ENCODE measurements at regions of chr11 and their contacts with region 1.

Region 1: DNA sequence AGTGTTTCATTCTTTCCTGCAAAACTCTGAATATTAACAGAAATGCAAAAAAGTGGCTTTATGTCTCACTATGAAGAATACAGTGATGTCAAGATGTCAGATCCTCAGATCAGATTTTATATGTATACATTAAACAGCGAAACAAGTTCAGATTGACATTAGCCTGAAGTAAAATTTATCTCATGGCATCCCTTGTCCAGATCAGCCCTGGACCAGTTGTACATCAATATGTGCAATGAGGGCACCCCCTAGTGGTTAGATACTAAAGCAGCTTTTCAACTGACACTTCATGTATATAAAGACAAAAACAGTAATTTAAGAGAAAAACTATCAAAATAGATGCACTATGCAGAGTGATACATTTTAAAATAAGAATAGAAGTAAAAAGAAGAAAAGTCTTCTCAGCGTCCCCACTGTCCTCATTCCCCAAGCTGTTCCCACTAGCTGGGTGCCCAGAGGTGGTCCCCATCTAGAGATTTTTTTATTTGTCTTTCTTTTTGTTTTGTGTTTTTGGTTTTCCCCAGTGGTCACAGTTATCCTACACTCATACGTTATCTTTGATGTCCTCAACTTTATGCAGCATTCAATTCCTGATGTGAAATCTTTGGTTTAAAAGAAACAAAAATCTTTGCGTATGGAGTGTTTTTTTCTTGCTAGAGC is 2193.4 kb upstream of the RAG2 start:
- DNase-seq: peak; percentile 51
- H3K4me3 ChIP-seq: no peak overlapping the region
- H3K27ac ChIP-seq: no peak overlapping the region
- H3K4me1 ChIP-seq: no peaks in the 10 kb centered on the region
- H3K27me3 ChIP-seq: no peaks in the 10 kb centered on the region
- CTCF ChIP-seq: peak; percentile 57
- POLR2A ChIP-seq: no peak

Region 2: DNA sequence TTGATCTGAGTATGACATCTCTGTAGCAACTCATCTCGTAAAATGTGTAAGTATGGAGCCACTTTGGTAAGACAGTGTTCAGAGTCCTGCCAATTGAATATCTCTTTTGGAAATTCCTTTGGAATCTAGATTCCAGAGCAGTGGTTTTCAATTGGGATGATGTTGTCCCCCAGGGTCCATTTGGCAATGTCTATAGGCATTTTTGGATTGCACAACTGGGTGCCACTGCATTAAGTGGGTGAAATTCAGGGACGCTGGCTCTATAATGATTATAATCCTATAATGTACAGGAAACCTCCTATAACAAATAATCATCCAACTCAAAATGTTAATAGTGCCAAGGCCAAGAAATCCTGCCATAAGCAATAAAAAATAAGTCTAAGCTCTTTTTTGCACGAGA is 1788.6 kb before region 1 on chr11:
- CTCF ChIA-PET with region 1: interaction called, 4 read pairs
- POLR2A ChIA-PET with region 1: no interaction called
- dilution Hi-C with region 1: no loop called
- intact Hi-C with region 1: loop called (anchors 5 kb)
- DNase-seq: no peak
- H3K4me3 ChIP-seq: no peak overlapping the region
- H3K27ac ChIP-seq: no peak overlapping the region
- H3K4me1 ChIP-seq: no peaks in the 10 kb centered on the region
- H3K27me3 ChIP-seq: no peaks in the 10 kb centered on the region
- CTCF ChIP-seq: no peak
- POLR2A ChIP-seq: no peak

Region 3: GRCh38 chr11:37657645-37658044 is 1133.8 kb before region 1 on chr11:
- CTCF ChIA-PET with region 1: interaction called, 10 read pairs
- POLR2A ChIA-PET with region 1: no interaction called
- dilution Hi-C with region 1: no loop called
- intact Hi-C with region 1: no loop called
- DNase-seq: peak; percentile 45
- H3K4me3 ChIP-seq: no peak overlapping the region
- H3K27ac ChIP-seq: no peak overlapping the region
- H3K4me1 ChIP-seq: no peaks in the 10 kb centered on the region
- H3K27me3 ChIP-seq: no peaks in the 10 kb centered on the region
- CTCF ChIP-seq: peak; percentile 15 to 29
- POLR2A ChIP-seq: no peak

Region 4: GRCh38 chr11:37946155-37946766 is 845.2 kb before region 1 on chr11:
- CTCF ChIA-PET with region 1: interaction called, 35 read pairs
- POLR2A ChIA-PET with region 1: no interaction called
- dilution Hi-C with region 1: no loop called
- intact Hi-C with region 1: no loop called
- DNase-seq: peak; percentile 78
- H3K4me3 ChIP-seq: no peak overlapping the region
- H3K27ac ChIP-seq: no peak overlapping the region
- H3K4me1 ChIP-seq: no peaks in the 10 kb centered on the region
- H3K27me3 ChIP-seq: no peaks in the 10 kb centered on the region
- CTCF ChIP-seq: peak; percentile 66 to 73
- POLR2A ChIP-seq: no peak

Region 5: DNA sequence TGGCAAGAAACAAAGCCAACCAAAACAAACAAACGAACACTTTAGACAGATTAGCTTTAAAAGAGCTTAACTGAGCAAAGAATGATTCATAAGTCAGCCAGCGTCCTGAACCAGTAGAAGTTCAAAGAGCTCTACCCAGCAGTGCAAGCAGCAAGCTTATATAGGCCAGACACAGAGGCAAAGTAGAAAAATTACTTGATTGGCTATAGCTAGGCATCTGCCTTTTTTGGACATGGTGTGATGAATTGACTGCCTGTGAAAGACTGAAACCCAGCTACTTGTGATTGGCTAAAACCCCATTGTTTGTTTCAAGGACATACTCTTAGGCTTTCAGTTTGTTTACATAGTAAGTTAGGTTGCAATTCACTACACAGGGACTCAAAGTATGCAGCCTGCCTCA is 73.4 kb before region 1 on chr11:
- CTCF ChIA-PET with region 1: no interaction called
- POLR2A ChIA-PET with region 1: no interaction called
- dilution Hi-C with region 1: no loop called
- intact Hi-C with region 1: no loop called
- DNase-seq: no peak
- H3K4me3 ChIP-seq: no peak overlapping the region
- H3K27ac ChIP-seq: no peak overlapping the region
- H3K4me1 ChIP-seq: no peaks in the 10 kb centered on the region
- H3K27me3 ChIP-seq: no peaks in the 10 kb centered on the region
- CTCF ChIP-seq: no peak
- POLR2A ChIP-seq: no peak

Region 6: DNA sequence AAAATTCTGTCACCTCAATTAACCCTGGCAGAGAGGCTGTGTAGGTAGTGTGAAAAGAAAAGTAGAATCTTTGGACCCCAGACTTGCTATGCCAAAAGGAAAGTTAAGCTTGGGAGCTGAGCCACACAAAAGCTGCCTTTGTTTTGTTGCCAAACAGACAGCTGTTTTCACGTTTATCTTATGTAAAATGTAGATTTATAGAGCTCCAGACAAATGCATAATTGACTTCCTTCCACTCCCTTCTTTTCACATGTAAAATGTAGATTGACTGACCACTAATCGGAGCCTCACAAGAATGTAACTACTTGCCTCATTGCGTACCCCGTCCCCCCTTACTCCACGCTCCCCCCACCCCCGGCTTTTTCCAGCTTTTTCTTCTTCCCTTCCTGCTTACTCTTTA is 108.8 kb after region 1 on chr11:
- CTCF ChIA-PET with region 1: no interaction called
- POLR2A ChIA-PET with region 1: no interaction called
- dilution Hi-C with region 1: no loop called
- intact Hi-C with region 1: no loop called
- DNase-seq: no peak
- H3K4me3 ChIP-seq: no peak overlapping the region
- H3K27ac ChIP-seq: no peak overlapping the region
- H3K4me1 ChIP-seq: no peaks in the 10 kb centered on the region
- H3K27me3 ChIP-seq: no peaks in the 10 kb centered on the region
- CTCF ChIP-seq: no peak
- POLR2A ChIP-seq: no peak

Region 7: GRCh38 chr11:40293655-40294348 is 1502.4 kb after region 1 on chr11:
- CTCF ChIA-PET with region 1: interaction called, 3 read pairs
- POLR2A ChIA-PET with region 1: no interaction called
- dilution Hi-C with region 1: no loop called
- intact Hi-C with region 1: loop called (anchors 5 kb)
- DNase-seq: peak; percentile 87
- H3K4me3 ChIP-seq: peak overlapping the region; percentile 32 to 56 (median 54)
- H3K27ac ChIP-seq: no peak overlapping the region
- H3K4me1 ChIP-seq: no peaks in the 10 kb centered on the region
- H3K27me3 ChIP-seq: peaks cover 16 to 17% of the 10 kb centered on the region in 2 experiments
- CTCF ChIP-seq: peak; percentile 88 to 91
- POLR2A ChIP-seq: no peak

Measured in endothelial cell of umbilical vein (primary cell).